ENCODE measurements at regions of chr5 and their contacts with region 1.

Region 1: GRCh38 chr5:10627160-10627701 is 63.4 kb downstream of the ANKRD33B start:
- DNase-seq: no peak
- ATAC-seq: peak; percentile 21
- H3K4me3 ChIP-seq: peak overlapping the region; percentile 59
- H3K27ac ChIP-seq: peak overlapping the region; percentile 1; the same call in 1 of the 2 replicates
- H3K4me1 ChIP-seq: peaks cover 12% of the 10 kb centered on the region
- H3K27me3 ChIP-seq: no peaks in the 10 kb centered on the region
- CTCF ChIP-seq: no peak

Region 2: DNA sequence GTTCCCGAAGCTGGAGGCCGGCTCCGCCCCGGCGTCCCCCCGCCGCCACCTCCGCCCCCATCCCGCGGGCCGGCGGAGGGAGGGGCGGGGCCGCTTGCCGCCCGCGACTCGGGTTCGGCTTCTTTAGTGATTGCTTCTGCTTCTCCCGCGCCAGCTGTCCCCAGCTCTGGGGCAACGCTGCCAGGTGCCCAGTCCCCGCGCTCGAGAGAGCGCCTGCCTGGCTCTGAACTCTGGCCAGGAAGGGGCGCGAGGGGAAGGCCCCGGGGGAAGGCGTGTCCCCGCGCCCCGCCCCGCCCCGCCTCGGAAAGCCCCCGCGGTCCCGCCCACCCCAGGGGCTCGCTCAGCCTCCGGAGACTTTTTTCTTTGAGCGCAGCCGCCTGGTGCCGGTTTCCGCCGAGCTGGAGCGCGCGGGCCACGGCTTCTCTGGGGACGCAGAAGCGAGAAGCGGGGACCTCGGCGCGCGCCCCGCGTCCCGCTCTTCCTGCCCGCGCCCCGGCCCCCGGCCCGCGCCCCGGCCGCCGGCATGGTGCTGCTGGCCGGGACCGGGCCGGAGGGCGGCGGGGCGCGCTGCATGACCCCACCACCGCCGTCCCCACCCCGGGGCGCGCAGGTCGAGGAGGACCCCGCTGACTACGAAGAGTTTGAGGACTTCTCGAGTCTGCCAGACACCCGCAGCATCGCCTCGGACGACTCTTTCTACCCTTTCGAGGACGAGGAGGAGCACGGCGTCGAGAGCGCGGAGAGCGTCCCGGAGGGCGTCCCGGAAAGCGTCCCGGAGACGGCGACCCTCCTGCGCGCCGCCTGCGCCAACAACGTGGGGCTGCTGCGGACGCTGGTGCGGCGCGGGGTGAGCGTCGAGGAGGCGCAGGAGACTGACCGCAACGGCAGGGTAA is 63.0 kb before region 1 on chr5 and contains the start of gene ANKRD33B:
- CTCF ChIA-PET with region 1: interaction called, 12 read pairs
- POLR2A ChIA-PET with region 1: no interaction called
- intact Hi-C with region 1: loop called (anchors 5 kb)
- DNase-seq: peak; percentile 88
- ATAC-seq: peak; percentile 69
- H3K4me3 ChIP-seq: peak within 1 kb of the TSS; percentile 82
- H3K27ac ChIP-seq: peak within 1 kb of the TSS; percentile 72
- H3K4me1 ChIP-seq: peaks cover 29% of the 10 kb centered on the region
- H3K27me3 ChIP-seq: no peaks in the 10 kb centered on the region
- CTCF ChIP-seq: no peak
- total RNA-seq, gene ANKRD33B: 13.2 and 14.9 TPM in 2 replicates

Region 3: DNA sequence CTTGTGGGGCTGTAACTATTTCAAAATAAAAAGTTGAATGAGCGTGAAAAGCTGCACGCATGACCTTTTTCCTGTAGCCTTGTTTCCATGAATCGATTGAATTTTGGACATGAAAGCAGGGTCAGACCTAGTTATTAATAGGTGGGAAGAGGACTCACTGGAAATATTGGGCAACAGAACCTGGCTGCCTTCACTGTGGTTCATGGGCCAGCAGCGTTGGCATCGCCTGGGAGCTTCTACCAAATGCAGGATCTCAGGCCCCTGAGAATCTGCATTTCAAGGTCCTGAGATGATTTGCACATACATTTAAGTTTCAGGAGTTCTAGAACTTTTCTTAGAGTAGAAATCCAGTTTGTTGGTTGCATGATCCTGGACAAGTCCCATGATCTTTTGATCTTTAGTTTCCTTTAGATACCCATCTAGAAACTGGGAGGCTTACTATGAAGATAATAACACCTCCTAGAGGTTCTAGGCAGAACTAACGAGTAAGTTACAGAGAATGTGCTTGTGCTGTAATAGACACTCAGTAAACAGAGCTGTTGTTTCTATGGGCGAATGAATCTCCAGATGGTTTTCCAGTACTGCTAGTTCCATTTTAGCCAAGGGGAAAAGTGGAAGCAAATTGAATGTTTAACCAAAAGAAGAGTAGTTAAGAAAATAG is 51.0 kb before region 1 on chr5:
- CTCF ChIA-PET with region 1: no interaction called
- POLR2A ChIA-PET with region 1: no interaction called
- intact Hi-C with region 1: no loop called
- DNase-seq: no peak
- ATAC-seq: no peak
- H3K4me3 ChIP-seq: no peak overlapping the region
- H3K27ac ChIP-seq: no peak overlapping the region
- H3K4me1 ChIP-seq: peaks cover 9% of the 10 kb centered on the region
- H3K27me3 ChIP-seq: no peaks in the 10 kb centered on the region
- CTCF ChIP-seq: peak; percentile 32

Measured in PC-3 (cell line).